ENCODE measurements at regions of chr20 and their contacts with region 1.

Region 1: GRCh38 chr20:58388882-58389323 is at the start of gene VAPB:
- DNase-seq: peak; percentile 98
- H3K4me3 ChIP-seq: peak within 1 kb of the TSS; percentile 76 to 91 (median 86)
- H3K27ac ChIP-seq: peak within 1 kb of the TSS; percentile 89 to 96 (median 94)
- H3K4me1 ChIP-seq: peaks cover 0 to 38% (median 36%) of the 10 kb centered on the region in 4 donors
- H3K27me3 ChIP-seq: no peaks in the 10 kb centered on the region
- CTCF ChIP-seq: no peak
- EP300 ChIP-seq: peak in 1 of 4 donors; percentile 62
- POLR2A ChIP-seq: no peak
- total RNA-seq, gene VAPB: 23.4 to 42.1 (median 32.7) TPM

Region 2: DNA sequence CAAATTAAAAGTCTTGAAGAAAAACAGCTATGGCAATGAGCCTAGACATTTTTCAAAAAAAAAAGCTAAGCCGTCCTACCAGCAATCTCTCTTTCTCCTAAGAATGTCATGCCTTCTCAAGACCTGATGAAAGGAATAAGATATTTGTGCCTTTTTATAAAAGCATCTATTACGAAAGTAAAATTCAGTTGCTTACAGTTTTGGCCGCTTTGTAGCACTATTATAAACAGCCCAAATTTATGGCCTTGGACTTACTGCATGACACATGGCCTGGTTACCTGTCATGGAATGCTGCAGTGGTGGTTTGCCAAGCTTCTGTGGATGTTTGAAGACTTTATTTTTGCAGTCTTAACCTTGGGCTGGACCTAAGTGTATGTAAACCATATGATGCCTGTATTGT is 22.0 kb before region 1 on chr20:
- intact Hi-C with region 1: loop called (anchors 2 kb)
- DNase-seq: no peak
- H3K4me3 ChIP-seq: peak overlapping the region in 2 of 4 donors; percentile 10 to 11
- H3K27ac ChIP-seq: peak overlapping the region in 3 of 4 donors; percentile 68 to 82 (median 72)
- H3K4me1 ChIP-seq: peaks cover 0 to 31% (median 25%) of the 10 kb centered on the region in 4 donors
- H3K27me3 ChIP-seq: no peaks in the 10 kb centered on the region
- CTCF ChIP-seq: no peak
- EP300 ChIP-seq: peak in 3 of 4 donors; percentile 21 to 73 (median 65)
- POLR2A ChIP-seq: no peak

Region 3: GRCh38 chr20:58447511-58448391 is 58.8 kb after region 1 on chr20:
- intact Hi-C with region 1: no loop called
- DNase-seq: no peak
- H3K4me3 ChIP-seq: no peak overlapping the region
- H3K27ac ChIP-seq: peak overlapping the region in 1 of 4 donors; percentile 7
- H3K4me1 ChIP-seq: peaks cover 0 to 39% (median 17%) of the 10 kb centered on the region in 4 donors
- H3K27me3 ChIP-seq: no peaks in the 10 kb centered on the region
- CTCF ChIP-seq: peak in 3 of 4 experiments; percentile 49 to 62 (median 59)
- EP300 ChIP-seq: no peak
- POLR2A ChIP-seq: no peak

Region 4: GRCh38 chr20:58571693-58572427 is 183.0 kb after region 1 on chr20:
- intact Hi-C with region 1: loop called (anchors 10 kb)
- DNase-seq: peak; percentile 76
- H3K4me3 ChIP-seq: no peak overlapping the region
- H3K27ac ChIP-seq: peak overlapping the region; percentile 31 to 88 (median 79)
- H3K4me1 ChIP-seq: peaks cover 2 to 59% (median 51%) of the 10 kb centered on the region in 4 donors
- H3K27me3 ChIP-seq: no peaks in the 10 kb centered on the region
- CTCF ChIP-seq: no peak
- EP300 ChIP-seq: peak in 3 of 4 donors; percentile 33 to 73 (median 52)
- POLR2A ChIP-seq: no peak

Measured in sigmoid colon (tissue), 7 donors.